Posterior cingulate gyrus (tissue), 11 donors: ENCODE measurements at regions of chr4 and their contacts with region 1.

Region 1: DNA sequence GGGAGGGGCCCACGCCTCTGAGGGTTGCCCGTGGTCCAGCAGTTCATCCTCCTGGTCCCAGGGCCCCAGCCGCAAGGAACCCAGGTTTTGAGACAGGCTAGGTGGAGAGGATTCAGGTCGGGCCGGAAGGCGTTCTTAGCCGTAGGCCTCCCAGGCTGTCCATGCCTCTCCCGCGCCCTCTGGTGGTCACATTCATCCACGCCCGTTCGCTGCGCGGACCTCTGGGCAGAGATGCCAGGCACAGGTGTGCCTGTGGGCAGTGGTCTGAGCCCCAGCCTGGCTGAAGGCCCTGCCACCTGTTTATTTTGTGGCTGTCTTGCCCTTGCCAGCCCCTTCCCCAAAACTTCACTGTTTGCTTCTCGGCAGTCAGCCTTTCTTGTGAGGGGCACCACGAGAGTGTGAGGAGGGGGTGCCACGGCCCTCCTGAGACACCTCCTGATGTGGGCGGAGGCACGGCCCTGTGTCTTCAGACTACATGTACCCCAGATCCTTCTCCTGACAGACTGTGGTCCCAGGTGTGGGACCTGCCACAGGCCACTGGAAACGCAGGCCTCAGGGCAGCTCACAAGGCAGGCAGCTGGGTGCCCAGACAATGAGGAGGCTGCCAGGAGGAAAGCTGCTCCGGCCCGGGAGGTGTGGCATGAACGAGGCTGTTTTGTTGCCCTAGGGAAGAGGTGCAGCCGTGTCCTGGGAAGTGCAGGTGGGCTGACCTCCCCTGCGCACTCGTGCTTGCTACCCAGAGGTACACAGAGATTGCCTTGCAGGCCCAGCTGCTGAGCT is 5.0 kb downstream of the UVSSA start:
- DNase-seq: peak; percentile 68 to 97 (median 86)

Region 2: DNA sequence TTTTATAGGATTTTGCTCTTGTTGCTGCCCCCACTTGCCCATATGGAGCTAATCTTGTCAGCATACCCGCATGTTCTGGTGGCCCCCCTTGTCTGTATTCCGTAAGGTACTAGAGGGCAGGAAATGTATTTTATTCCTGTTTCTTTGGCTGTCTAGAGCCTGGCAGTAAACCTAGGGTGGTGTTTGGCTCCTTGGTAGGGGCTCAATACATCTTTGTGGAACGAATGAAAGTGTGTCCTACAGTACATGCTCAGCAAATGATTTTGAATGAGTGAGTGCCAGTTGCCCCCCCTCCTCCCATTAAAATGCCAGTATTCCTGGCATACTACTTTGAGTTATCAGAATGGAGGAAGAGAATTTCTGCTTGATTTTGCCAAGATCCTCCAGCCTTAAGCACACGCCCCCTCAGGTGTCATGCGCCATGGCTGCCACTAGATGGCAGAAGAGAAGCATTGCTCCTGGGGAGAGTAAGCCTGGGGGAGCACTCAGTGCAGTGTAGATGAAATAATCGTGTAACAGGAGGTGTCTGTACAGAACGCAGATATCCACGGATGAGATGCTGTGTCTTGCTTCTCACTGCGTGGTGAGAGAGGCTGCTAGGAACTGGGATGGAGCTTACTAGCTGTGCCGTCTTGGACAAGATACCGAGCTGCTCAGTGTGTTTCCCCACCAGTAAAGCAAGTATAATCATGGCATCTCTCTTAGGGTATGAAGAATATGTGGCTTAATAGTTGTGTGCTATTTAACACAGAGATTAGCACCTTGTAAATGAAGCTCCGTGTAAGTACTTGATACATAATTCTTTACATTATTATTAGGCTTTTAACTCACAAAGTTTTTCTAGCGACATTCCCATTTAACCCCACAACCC is 221.5 kb before region 1 on chr4:
- intact Hi-C with region 1: loop called (anchors 1 kb)
- DNase-seq: peak; percentile 51 to 94 (median 76)

Region 3: DNA sequence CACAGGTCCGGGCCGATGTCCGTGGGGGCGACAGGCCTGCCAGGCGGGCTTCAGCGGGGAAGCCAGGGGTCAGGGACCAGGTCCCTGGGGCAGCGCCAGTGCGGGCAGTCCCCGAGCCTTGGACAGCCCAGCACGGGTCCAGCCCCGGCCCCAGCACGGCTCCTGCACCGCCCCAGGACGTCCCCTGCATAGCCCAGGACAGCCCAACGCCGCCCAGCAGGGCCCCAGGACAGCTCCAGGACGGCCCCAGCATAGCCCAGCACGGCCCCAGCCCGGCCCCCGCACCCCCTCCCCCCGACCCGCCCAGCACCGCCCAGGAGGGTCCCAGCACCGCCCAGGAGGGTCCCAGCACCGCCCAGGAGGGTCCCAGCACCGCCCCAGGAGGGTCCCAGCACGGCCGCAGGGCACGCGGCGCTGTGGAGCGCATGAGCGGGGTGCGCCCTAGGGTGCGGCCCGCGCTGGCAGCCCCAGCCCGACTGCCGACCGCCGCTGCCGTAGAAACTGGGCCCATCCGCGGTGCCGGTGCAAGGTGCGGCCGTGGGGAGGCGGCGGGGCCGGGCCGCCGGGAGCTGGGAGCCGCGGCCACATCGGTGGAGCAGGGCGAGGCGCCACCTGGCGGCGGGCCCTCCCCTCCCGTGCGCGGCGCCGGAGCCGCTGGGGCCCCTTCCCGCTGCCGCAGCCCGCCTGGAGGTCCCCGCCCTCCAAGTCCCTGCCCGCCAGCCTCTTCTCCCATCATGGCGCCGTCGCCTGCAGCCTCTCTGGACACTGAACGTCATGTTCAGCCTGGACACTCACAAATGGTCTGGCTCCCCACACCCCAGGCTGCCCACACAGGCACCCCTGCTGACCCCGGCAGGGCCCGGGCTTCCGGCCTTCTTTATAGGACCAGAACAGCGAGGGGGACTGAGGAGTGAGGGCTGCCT is 161.0 kb after region 1 on chr4:
- intact Hi-C with region 1: loop called (anchors 2 kb)
- DNase-seq: peak in 6 of 10 donors; percentile 7 to 84 (median 54)

Region 4: GRCh38 chr4:1616557-1616930 is 264.5 kb after region 1 on chr4:
- intact Hi-C with region 1: no loop called
- DNase-seq: no peak

Region 5: DNA sequence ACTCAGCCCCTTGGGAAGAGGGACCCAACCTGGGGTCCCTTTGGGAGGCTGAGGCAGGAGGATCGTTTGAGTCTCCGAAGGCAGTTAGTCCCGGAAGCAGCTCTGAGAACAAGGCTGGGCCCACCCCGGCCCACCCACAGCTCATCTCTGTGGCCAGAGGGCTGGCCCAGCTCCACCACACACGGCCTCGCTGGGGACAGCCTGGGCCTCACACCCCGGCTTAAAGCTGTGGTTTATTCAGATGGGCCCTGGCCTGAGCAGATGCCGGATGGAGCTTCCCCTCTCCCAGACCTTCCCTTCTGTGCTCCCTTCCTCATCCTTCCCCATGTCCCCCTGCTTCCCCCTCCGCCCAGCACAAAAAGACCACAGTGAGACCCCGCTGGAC is 277.6 kb after region 1 on chr4:
- intact Hi-C with region 1: loop called (anchors 5 kb)
- DNase-seq: no peak

Region 6: DNA sequence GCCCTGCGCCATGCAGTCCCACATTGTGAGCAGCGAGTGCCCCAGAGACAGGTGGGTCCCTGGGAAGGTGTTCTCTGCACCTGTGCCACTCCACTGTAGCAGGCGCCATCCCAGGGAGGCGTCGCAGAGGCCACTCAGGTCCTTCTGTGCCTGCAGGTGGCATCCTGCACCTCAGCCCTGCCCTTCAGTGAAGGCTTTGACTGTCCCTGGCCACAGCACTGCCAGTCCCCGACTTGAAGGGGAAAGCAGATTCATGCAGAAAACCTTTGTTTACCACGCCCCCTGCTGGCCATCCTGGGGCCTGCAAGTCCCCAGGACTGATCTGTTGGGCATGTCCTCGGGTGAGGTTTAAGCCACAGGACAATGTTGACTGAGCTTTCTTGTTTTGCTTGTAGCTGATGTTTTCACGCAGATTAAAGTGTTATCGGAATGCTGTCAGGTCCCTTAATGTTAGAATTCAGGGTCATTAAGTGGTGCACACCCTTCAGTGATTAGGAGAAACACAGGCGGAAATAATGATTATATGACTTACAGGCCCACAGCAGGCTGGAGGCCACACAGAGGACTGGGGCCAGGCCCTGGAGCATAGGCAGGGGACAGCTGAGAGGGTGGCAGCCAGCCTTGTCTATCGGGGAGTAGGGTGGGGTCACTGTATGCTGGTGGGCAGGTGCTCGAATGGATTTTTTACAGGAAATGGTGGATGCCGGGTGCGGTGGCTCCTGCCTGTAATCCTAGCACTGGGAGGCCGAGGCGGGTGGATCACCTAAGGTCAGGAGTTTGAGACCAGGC is 374.3 kb after region 1 on chr4:
- intact Hi-C with region 1: loop called (anchors 1 kb)
- DNase-seq: peak; percentile 77 to 98 (median 94)